ENCODE measurements at regions of chr14 and their contacts with region 1.

Region 1: DNA sequence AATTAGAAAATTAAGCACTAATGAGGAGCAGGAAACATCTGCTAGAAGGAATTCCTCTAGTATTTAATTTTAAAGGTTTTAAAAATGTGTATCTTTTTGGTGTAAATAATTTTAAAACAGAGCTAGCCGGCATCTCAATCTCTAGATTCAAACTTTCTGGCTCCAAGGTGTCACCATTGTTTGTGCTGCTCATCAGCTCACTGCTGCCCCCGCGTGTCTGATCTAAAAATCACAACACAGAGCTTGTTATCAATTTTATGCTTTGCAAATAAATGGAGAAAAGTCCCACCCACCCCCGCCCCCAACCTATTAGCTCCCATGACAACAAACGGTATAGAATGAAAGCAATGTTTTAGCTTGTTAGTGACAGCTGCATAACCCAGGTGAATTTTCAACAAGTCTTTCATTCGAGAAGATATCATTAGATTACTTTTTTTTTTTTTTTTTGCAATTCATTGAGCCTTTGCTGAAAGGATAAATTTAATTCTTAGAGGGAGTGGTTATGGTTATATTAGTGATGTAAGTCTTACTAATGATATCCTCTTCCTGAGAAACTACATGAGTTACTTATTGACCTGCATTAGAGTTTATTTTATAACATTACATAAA is 11.3 kb upstream of the ABHD12B start:
- DNase-seq: peak; percentile 61
- H3K4me3 ChIP-seq: peak overlapping the region; percentile 56
- H3K27ac ChIP-seq: no peak overlapping the region
- H3K27me3 ChIP-seq: no peaks in the 10 kb centered on the region
- CTCF ChIP-seq: peak; percentile 74

Region 2: DNA sequence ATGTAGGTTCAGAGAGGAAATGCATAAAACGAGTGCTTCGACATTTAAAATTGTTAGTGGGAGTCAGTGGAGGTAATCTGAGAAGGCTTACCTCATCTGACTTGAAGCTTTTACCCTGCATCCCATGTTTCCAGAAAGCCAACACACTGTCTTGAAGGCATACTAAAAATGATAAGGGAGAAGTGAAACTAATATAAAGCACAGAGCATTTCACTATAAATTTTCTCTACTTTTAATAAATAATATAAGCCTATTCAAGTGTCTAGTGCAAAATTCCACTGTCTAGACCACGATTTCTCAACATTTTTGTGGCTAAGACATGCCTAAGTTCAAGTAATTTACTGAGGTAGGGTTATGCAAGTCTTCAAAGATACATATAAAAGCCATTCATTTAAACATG is 434.8 kb before region 1 on chr14:
- CTCF ChIA-PET with region 1: no interaction called
- POLR2A ChIA-PET with region 1: no interaction called
- DNase-seq: peak; percentile 7
- H3K4me3 ChIP-seq: no peak overlapping the region
- H3K27ac ChIP-seq: no peak overlapping the region
- H3K27me3 ChIP-seq: no peaks in the 10 kb centered on the region
- CTCF ChIP-seq: no peak

Region 3: GRCh38 chr14:50599700-50600444 is 260.7 kb before region 1 on chr14:
- CTCF ChIA-PET with region 1: interaction called, 11 read pairs
- POLR2A ChIA-PET with region 1: no interaction called
- DNase-seq: no peak
- H3K4me3 ChIP-seq: no peak overlapping the region
- H3K27ac ChIP-seq: no peak overlapping the region
- H3K27me3 ChIP-seq: no peaks in the 10 kb centered on the region
- CTCF ChIP-seq: peak; percentile 66

Region 4: GRCh38 chr14:50773632-50774541 is 86.7 kb before region 1 on chr14:
- CTCF ChIA-PET with region 1: interaction called, 60 read pairs
- POLR2A ChIA-PET with region 1: interaction called, 3 read pairs
- DNase-seq: no peak
- H3K4me3 ChIP-seq: no peak overlapping the region
- H3K27ac ChIP-seq: no peak overlapping the region
- H3K27me3 ChIP-seq: no peaks in the 10 kb centered on the region
- CTCF ChIP-seq: peak; percentile 87

Region 5: GRCh38 chr14:50804181-50804721 is 56.3 kb before region 1 on chr14:
- CTCF ChIA-PET with region 1: interaction called, 14 read pairs
- POLR2A ChIA-PET with region 1: interaction called, 3 read pairs
- DNase-seq: no peak
- H3K4me3 ChIP-seq: no peak overlapping the region
- H3K27ac ChIP-seq: peak overlapping the region; percentile 81
- H3K27me3 ChIP-seq: no peaks in the 10 kb centered on the region
- CTCF ChIP-seq: no peak

Region 6: DNA sequence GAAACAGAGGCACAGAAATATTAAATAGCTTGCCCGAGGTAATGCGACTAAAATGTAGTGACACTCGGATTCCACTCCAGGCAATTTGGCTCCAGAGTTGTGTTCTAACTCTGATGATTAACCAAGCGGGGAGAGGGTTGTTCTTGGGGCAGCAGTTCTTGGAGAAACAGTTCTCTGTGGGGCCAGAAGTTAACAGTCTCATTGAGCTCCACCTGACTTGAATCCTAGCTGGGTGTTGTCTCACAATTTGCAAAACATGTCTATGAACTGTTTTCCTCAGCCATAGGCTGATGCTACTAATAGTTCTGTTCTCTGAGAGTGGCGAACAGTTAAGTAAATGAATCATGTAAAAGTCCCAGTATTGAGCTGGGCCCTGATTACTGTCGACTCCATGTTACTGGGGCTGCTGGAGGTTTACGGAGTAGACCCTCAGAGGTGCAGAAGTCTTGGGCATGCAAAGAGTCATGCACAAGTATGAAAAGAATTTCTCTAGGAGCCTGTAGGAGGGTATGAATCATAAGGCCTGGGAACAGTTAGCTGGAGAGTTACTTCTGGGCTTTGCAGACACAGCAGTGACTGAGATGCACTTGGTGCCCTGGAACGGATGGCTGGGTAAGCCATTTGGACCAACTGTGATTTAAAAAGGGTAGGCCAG is 14.2 kb before region 1 on chr14:
- CTCF ChIA-PET with region 1: interaction called, 51 read pairs
- POLR2A ChIA-PET with region 1: interaction called, 4 read pairs
- DNase-seq: peak; percentile 65
- H3K4me3 ChIP-seq: no peak overlapping the region
- H3K27ac ChIP-seq: peak overlapping the region; percentile 82
- H3K27me3 ChIP-seq: no peaks in the 10 kb centered on the region
- CTCF ChIP-seq: no peak

Region 7: DNA sequence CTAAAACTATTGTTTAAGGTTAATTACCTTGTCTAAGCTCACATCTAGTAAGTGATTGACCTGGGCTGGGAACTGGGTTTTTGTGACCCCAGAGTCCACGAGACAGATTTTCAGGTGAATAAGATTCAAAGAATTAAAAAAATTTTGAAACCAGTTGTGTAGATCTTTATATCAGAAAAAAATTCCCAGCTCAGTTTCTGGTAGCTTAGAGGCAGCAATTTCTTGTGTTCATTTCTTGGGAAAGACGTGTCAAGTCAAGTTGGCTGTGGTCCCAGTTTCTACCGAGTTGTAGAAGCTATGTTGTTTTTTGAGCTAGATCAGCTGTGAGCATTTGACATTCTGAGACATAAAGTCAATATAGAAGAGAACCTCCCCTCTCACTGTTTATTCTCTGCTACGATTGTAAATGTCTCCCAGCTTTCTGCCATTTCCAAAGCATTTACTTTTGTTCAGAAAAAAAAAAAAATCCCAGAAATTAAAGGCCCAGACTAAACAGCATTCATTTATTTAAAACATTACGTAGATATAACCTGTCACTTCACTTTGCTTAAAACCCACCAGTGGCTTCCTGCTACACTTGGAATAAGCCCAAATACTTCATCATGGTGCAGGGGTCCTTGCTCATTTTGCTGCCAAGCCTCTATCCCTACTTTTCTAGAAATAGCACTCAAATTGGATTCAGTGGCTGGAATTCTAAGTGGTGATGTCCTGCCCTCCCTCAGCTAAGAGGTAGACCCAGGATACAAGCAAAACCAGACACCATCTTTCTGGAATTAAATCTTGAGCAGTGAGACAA is 104.2 kb after region 1 on chr14:
- CTCF ChIA-PET with region 1: interaction called, 10 read pairs
- POLR2A ChIA-PET with region 1: no interaction called
- DNase-seq: peak; percentile 96
- H3K4me3 ChIP-seq: no peak overlapping the region
- H3K27ac ChIP-seq: peak overlapping the region; percentile 47
- H3K27me3 ChIP-seq: peaks cover 3% of the 10 kb centered on the region
- CTCF ChIP-seq: no peak

Region 8: DNA sequence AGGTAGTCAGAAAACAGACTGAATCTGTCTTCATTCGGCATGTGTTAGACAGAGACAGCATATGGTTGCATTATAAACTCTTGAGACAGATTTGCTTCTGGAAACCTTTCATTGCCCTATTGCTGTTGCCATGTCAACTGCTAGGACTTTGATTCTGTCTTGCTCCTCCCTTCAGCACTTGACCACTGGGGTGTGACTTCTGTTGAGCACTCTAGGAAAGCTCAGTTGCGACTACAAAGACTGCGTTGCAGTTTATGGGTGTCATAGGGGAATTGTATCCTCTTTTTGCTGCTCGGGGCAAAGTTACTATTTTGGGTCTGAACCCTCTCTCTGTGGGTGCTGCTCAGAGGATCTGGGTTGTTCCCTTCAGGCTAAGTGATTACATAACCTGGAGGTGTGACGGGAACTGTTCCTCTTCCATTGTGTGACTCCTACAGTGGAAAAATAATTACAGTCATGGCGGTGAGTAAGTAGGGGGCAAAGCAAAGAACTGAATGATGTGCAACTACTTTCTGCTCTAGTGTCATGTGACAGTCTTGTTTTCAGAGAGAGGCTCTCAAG is 278.6 kb after region 1 on chr14:
- CTCF ChIA-PET with region 1: no interaction called
- POLR2A ChIA-PET with region 1: no interaction called
- DNase-seq: no peak
- H3K4me3 ChIP-seq: no peak overlapping the region
- H3K27ac ChIP-seq: no peak overlapping the region
- H3K27me3 ChIP-seq: peaks cover 5% of the 10 kb centered on the region
- CTCF ChIP-seq: no peak

Region 9: DNA sequence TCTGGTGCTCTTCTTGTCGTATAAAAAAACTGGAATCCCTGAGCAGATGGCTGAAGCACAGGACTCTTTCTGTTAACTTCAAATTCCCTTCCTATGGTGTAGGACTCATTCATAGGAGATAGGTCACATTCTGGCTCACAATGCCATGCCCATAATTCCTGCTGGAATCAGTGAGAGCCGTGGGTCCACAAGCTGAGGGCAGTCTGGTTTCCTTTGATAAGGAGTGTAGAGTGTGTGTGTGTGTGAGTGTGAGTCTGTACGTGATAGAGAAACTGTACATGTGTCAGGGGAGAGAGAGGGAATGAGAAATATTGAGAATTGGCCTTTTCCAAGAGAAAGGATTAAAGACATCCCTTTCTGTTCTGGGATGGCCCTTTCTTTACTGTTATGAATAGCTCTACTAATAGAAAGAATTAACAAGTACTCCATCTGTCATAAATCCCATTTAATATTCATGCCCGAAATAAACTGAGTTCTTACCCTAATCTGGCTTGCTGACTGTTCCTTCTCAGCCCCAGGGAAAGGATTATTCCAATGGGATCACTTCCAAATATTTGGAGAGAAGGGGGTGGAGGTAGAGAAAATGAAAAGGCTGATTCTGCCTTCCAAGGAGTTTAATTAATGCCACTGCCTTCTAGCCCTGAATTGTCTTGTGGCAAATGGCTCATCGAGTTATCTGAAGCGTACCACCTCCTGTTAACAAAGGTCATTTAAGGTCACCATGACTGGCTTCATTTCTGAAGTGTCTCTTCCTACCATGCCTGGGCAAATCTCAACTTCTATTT is 458.4 kb after region 1 on chr14:
- CTCF ChIA-PET with region 1: no interaction called
- POLR2A ChIA-PET with region 1: no interaction called
- DNase-seq: no peak
- H3K4me3 ChIP-seq: no peak overlapping the region
- H3K27ac ChIP-seq: no peak overlapping the region
- H3K27me3 ChIP-seq: no peaks in the 10 kb centered on the region
- CTCF ChIP-seq: no peak

Region 10: DNA sequence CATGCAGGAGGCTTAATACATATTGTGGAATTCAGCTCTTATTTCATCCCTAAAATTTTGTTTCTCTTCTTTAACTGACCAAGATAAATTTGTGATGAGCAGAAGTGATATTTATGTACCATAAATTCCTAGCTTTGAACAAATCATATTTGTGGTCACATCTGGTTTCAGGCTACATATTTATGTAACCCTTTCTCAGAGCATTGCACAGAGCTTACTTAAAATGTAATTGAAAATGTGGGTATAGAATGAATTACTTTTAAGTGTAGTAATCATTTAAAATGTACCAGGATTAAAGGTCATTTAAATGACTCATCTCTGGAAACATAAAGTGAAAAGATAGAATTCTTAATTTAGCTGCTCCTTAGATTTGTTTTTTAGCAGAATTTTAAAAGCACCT is 661.2 kb after region 1 on chr14:
- CTCF ChIA-PET with region 1: no interaction called
- POLR2A ChIA-PET with region 1: no interaction called
- DNase-seq: peak; percentile 48
- H3K4me3 ChIP-seq: no peak overlapping the region
- H3K27ac ChIP-seq: no peak overlapping the region
- H3K27me3 ChIP-seq: no peaks in the 10 kb centered on the region
- CTCF ChIP-seq: no peak